ENCODE measurements at regions of chr16 and their contacts with region 1.

Region 1: GRCh38 chr16:7615565-7615964 is 282.9 kb downstream of the RBFOX1 start:
- DNase-seq: no peak

Region 2: DNA sequence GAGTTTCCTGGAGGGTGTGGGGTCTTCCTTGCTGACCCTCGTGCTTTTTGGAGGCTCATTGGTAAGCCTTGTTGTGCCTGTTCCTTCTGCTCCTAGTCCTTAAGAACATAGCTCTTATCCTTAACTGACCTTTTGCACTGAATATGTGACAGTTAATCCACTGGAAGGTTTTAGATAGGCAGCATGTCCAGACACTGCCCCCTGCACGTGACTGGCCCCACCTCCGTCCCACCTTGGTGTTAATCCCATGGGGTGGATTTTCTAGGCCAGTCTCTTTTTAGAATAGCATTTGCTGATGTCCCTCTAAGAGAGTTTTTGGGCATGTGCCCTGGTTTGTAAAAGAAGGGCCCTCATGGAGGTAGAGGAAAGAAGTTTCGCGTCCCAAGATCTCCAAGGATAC is 224.6 kb before region 1 on chr16:
- intact Hi-C with region 1: no loop called
- DNase-seq: no peak

Region 3: DNA sequence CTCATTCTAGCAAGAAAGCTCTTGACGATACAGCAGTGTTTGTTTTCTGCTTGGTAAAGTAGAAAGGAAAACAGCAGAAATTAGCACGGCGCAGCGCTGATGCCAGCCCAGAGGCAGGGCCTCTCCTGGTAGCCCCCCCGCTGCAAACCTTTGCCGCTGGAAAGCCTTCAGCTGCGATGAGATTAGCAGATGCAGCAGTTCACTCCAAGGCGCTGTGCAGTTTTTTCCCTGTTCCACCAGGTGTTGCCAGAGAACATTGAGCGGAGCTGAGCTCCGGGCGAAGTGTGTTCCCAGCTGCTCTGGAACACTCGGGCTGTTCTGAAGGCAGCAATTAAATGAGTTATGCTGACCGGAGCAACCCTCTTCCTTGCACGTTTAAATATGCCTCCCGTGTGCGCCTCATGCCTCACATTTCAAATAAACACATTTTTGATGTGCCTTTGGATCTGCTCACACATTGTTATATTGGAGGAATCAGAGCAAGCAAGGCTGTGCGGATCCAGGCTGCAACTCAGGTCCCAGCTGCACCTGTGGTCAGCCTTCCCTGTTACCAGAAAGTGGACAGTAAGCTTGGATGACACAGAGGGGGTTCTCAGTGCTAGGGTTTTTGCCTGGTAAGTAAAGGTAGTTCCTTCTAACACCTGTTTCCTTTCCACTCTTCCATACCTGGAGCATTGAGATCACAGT is 210.3 kb before region 1 on chr16:
- intact Hi-C with region 1: loop called (anchors 10 kb)
- DNase-seq: no peak

Region 4: DNA sequence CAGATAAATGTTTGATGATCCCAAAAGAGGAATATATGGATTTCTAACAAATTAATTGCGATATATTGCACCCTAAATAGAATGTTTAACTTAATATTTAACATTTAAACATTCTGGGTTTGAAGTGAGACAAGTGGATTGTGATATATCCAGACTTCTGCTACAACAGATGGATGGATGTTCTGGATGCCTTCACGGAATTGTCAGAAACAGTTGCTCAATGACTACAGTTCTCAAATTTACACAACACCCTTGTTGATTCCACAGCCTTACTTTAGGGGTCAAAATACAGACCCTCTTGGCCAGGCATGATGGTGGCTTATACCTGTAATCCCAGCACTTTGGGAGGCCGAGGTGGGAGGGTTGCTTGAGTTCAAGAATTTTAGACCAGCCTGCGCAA is 32.2 kb before region 1 on chr16:
- intact Hi-C with region 1: no loop called
- DNase-seq: no peak